Activated CD4-positive, alpha-beta T cell treated with anti-CD3 and anti-CD28 coated beads, Interleukin-2, amount 10 ng/mL, durations not matched to agents 24 days and 14 days (primary cell): ENCODE measurements at regions of chr3 and their contacts with region 1.

Region 1: GRCh38 chr3:183099026-183099837 is at the start of gene MCCC1:
- DNase-seq: peak; percentile 99
- H3K4me3 Mint-ChIP-seq: peak within 1 kb of the TSS; percentile 97
- H3K27ac Mint-ChIP-seq: peak within 1 kb of the TSS; percentile 97
- H3K4me1 Mint-ChIP-seq: peaks cover 26% of the 10 kb centered on the region
- H3K27me3 Mint-ChIP-seq: no peaks in the 10 kb centered on the region
- total RNA-seq, gene MCCC1: 25.4 and 27.5 TPM in 2 replicates

Region 2: DNA sequence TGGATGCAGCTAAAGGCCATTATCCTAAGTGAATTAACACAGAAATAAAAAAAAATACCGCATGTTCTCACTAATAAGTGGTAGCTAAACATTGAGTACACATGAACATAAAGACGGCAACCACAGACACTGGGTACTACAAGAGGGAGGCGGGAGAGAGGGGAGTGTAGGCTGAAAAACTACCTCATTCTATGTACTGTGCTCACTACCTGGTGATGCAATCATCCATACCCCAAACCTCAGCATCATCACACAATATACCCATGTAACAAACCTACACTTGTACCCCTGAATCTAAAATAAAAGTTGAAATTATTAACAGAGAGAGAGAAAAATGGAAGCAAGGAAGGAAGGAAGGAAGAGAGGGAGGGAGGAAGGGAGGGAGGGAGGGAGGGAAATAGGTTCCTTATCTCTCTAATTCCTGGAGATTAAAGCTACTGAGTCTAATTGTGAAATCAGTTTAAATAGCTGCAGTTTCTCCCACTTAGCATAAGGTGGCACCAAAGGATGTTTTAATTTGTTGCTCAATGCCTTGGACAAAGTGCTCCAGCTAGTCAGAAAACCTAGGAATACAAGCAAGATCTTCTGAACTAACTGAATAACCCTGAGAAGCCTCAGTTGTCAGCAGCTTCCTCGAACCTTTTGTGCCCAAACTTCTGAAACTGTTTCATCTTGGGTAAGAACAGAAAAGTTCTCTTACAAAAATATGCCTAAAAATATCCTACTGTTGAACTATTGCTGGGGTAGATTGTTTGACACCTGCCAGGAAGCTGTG is 385.3 kb before region 1 on chr3:
- intact Hi-C with region 1: loop called (anchors 10 kb)
- DNase-seq: peak; percentile 68
- H3K4me3 Mint-ChIP-seq: no peak overlapping the region
- H3K27ac Mint-ChIP-seq: peak overlapping the region; percentile 56
- H3K4me1 Mint-ChIP-seq: peaks cover 15% of the 10 kb centered on the region
- H3K27me3 Mint-ChIP-seq: peaks cover 4% of the 10 kb centered on the region

Region 3: GRCh38 chr3:182909318-182910040 is 189.8 kb before region 1 on chr3:
- intact Hi-C with region 1: loop called (anchors 1 kb)
- DNase-seq: no peak
- H3K4me3 Mint-ChIP-seq: no peak overlapping the region
- H3K27ac Mint-ChIP-seq: no peak overlapping the region
- H3K4me1 Mint-ChIP-seq: peaks cover 35% of the 10 kb centered on the region
- H3K27me3 Mint-ChIP-seq: no peaks in the 10 kb centered on the region

Region 4: DNA sequence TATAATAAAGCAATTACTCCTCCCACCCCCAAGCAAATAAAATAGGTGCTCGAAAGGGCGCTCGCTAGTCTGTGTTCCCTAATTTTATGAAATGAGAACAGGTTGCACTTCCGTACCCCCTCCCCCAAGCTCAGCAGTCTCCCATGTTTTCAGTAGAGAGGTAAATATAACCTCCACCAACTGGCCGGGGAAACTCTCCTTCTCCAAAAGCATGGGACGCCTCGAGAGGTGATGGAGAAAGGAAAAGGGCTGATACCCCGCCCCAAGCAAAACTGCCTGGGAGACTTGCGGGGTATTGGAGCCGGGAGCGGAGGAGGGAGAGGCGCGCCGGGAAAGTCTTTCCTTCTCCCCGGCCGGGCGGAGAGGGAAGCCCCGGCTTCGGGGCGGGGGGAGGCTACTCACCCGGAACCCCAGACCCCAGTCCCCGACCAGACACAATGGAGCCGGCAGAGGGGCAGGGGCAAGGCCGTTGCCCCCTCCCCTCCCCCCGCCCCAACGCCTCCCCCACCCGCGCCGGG is 119.5 kb before region 1 on chr3:
- intact Hi-C with region 1: loop called (anchors 2 kb)
- DNase-seq: peak; percentile 77
- H3K4me3 Mint-ChIP-seq: peak overlapping the region; percentile 97
- H3K27ac Mint-ChIP-seq: peak overlapping the region; percentile 88
- H3K4me1 Mint-ChIP-seq: peaks cover 27% of the 10 kb centered on the region
- H3K27me3 Mint-ChIP-seq: no peaks in the 10 kb centered on the region

Region 5: DNA sequence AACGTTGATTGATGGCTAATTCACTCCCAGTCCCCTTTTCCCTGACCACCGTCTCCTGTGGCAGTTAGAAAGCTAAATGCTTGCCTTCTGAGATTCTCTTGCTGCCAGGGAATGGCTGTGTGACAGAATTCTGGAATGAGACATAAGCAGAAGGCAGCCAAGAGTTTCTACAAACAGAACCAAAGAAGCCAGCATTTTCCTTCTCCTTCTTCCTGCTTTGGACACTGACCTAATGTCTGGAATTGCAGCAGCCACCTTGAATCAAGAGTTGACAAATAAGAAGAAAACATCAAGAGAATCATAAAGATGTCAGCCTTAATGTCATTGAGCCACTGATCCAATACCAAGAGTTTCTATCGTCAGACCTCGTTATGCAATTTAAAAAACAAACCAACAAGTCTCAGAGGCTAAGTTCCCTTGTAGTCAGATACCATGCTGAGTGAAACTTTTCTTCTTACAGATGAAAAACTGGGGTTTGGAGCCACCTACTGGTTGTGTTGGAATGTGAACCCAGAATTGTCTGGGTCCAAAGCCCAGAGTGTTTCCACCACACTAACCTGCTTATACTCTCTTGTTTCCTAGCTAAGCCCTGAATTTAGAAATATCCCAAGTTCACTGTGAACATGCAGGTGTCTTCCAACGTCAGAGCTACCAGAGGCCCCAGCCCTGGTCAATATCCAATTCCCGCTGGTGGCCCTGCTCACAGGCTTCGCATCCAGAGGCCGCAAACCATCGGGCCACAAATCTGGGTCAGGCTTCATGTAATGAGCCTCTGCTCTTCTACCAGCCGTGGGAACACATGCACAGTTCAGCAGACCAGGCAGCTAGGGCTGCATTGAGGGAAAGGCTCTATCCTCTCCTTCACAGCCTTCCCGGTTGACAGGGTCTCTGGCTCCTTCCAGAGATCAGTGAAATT is 286.7 kb after region 1 on chr3:
- intact Hi-C with region 1: no loop called
- DNase-seq: peak; percentile 89
- H3K4me3 Mint-ChIP-seq: no peak overlapping the region
- H3K27ac Mint-ChIP-seq: no peak overlapping the region
- H3K4me1 Mint-ChIP-seq: peaks cover 16% of the 10 kb centered on the region
- H3K27me3 Mint-ChIP-seq: no peaks in the 10 kb centered on the region